ENCODE measurements at regions of chr10 and their contacts with region 1.

Region 1: GRCh38 chr10:60351191-60351853 is 38.4 kb downstream of the ANK3 start:
- DNase-seq: peak; percentile 40
- ATAC-seq: peak; percentile 85
- H3K4me3 ChIP-seq: no peak overlapping the region; the same call in 1 of the 2 replicates
- H3K27ac ChIP-seq: peak overlapping the region; percentile 45; the same call in 1 of the 2 replicates
- H3K4me1 ChIP-seq: peaks cover 34% of the 10 kb centered on the region
- H3K27me3 ChIP-seq: no peaks in the 10 kb centered on the region
- CTCF ChIP-seq: no peak
- EP300 ChIP-seq: peak; percentile 9 to 73; a peak in 3 of 4 replicates
- POLR2A ChIP-seq: no peak
- RAD21 ChIP-seq: no peak

Region 2: GRCh38 chr10:58384999-58385783 is 1966.1 kb before region 1 on chr10 and contains the start of gene TFAM:
- CTCF ChIA-PET with region 1: no interaction called
- POLR2A ChIA-PET with region 1: no interaction called
- RAD21 ChIA-PET with region 1: no interaction called
- SMC1A ChIA-PET with region 1: no interaction called
- in situ Hi-C with region 1: no loop called
- intact Hi-C with region 1: loop called (anchors 10 kb)
- DNase-seq: peak; percentile 66
- ATAC-seq: peak; percentile 90
- H3K4me3 ChIP-seq: peak within 1 kb of the TSS; percentile 85
- H3K27ac ChIP-seq: peak within 1 kb of the TSS; percentile 88
- H3K4me1 ChIP-seq: peaks cover 5% of the 10 kb centered on the region
- H3K27me3 ChIP-seq: no peaks in the 10 kb centered on the region
- CTCF ChIP-seq: peak; percentile 49 to 67 (median 61)
- EP300 ChIP-seq: peak in 1 of 2 experiments; percentile 30; a peak in 1 of 4 replicates
- POLR2A ChIP-seq: peak; percentile 99
- RAD21 ChIP-seq: peak; percentile 70
- polyA plus RNA-seq, gene TFAM: 96.1 to 114 TPM

Region 3: DNA sequence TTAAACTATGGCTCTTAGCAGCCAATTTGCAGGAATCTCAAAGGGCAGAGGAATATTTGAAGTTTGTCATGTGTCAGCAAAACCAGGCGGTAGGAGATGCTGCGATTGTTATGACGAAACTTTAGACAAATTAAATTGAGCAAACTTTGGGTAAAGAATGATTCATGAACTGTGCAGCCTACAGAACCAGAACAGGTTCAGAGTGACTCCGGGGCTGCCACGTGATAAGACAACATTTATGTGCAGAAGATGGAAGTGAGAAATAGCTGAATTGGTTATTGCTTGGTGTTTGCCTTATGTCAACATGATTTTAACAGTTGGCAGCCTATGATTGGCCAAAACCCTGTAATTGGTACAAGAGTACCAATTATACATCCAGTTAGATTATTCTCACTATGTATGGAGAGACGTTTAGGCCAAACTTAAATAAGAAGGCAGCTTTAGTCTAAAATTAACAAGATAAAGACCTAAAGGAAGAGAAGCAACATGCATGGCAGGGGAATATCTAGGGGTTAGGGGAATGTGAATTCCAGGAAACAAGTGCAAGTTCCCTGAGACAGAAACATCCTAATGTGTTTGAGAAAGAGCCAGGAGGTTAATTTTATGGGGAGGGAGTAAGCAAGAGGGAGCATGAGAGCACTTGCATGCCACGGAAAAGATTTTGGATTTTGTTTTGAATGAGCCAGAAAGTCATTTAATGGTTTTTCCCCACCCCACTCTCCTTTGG is 405.5 kb before region 1 on chr10:
- CTCF ChIA-PET with region 1: no interaction called
- POLR2A ChIA-PET with region 1: no interaction called
- RAD21 ChIA-PET with region 1: no interaction called
- SMC1A ChIA-PET with region 1: no interaction called
- in situ Hi-C with region 1: no loop called
- intact Hi-C with region 1: no loop called
- DNase-seq: no peak
- ATAC-seq: no peak
- H3K4me3 ChIP-seq: no peak overlapping the region
- H3K27ac ChIP-seq: no peak overlapping the region
- H3K4me1 ChIP-seq: no peaks in the 10 kb centered on the region
- H3K27me3 ChIP-seq: no peaks in the 10 kb centered on the region
- CTCF ChIP-seq: no peak
- EP300 ChIP-seq: no peak
- POLR2A ChIP-seq: no peak
- RAD21 ChIP-seq: no peak

Region 4: DNA sequence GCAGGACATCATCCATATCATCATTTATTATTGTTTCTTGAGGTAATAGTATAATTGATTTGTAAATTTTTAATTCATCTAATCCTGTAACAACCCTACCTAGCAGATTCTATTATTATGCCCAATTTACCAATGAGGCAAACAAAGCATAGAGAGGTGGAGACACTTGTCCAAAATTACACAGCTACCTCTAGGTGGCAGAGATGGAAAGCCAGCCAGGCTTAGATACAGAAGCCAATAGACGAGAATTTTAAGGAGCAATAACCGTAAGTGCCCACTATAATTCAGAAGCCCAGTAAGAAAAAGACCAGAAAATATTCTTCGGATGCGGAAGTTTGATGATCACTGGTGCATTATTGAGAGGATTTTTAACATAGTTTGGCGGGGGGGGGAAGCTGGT is 15.6 kb before region 1 on chr10:
- CTCF ChIA-PET with region 1: interaction called, 17 read pairs
- POLR2A ChIA-PET with region 1: no interaction called
- RAD21 ChIA-PET with region 1: interaction called, 4 read pairs
- SMC1A ChIA-PET with region 1: interaction called, 7 read pairs
- in situ Hi-C with region 1: no loop called
- intact Hi-C with region 1: no loop called
- DNase-seq: no peak
- ATAC-seq: peak; percentile 68
- H3K4me3 ChIP-seq: no peak overlapping the region
- H3K27ac ChIP-seq: no peak overlapping the region
- H3K4me1 ChIP-seq: no peaks in the 10 kb centered on the region
- H3K27me3 ChIP-seq: no peaks in the 10 kb centered on the region
- CTCF ChIP-seq: peak; percentile 26 to 48 (median 30); a peak in 4 of 6 replicates
- EP300 ChIP-seq: no peak
- POLR2A ChIP-seq: no peak
- RAD21 ChIP-seq: peak; percentile 64

Region 5: DNA sequence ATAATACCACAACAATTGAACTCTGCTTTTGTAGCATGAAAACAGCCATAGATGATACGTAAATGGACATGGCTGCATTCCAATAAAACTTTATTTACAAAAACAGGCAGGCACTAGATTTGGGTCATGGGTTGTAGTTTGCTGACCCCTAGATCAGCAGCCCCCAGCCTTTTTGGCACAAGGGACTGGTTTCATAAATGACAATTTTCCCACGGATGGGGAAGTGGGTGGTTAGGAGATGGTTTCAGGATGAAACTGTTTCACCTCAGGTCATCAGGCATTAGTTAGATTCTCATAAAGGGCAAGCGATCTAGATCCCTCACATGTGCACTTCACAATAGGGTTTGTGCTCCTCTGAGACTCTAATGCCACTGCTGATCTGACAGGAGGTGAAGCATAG is 54.9 kb after region 1 on chr10:
- CTCF ChIA-PET with region 1: no interaction called
- POLR2A ChIA-PET with region 1: no interaction called
- RAD21 ChIA-PET with region 1: interaction called, 3 read pairs
- SMC1A ChIA-PET with region 1: interaction called, 4 read pairs
- in situ Hi-C with region 1: no loop called
- intact Hi-C with region 1: loop called (anchors 5 kb)
- DNase-seq: peak; percentile 7
- ATAC-seq: peak; percentile 77
- H3K4me3 ChIP-seq: no peak overlapping the region
- H3K27ac ChIP-seq: no peak overlapping the region
- H3K4me1 ChIP-seq: no peaks in the 10 kb centered on the region
- H3K27me3 ChIP-seq: no peaks in the 10 kb centered on the region
- CTCF ChIP-seq: no peak
- EP300 ChIP-seq: no peak
- POLR2A ChIP-seq: no peak
- RAD21 ChIP-seq: no peak

Region 6: GRCh38 chr10:60426400-60426799 is 75.1 kb after region 1 on chr10:
- CTCF ChIA-PET with region 1: interaction called, 3 read pairs
- POLR2A ChIA-PET with region 1: no interaction called
- RAD21 ChIA-PET with region 1: interaction called, 3 read pairs
- SMC1A ChIA-PET with region 1: interaction called, 16 read pairs
- in situ Hi-C with region 1: no loop called
- intact Hi-C with region 1: loop called (anchors 5 kb)
- DNase-seq: no peak
- ATAC-seq: no peak
- H3K4me3 ChIP-seq: no peak overlapping the region
- H3K27ac ChIP-seq: no peak overlapping the region
- H3K4me1 ChIP-seq: no peaks in the 10 kb centered on the region
- H3K27me3 ChIP-seq: no peaks in the 10 kb centered on the region
- CTCF ChIP-seq: no peak
- EP300 ChIP-seq: no peak
- POLR2A ChIP-seq: no peak
- RAD21 ChIP-seq: no peak

Region 7: GRCh38 chr10:60434418-60435046 is 83.2 kb after region 1 on chr10:
- CTCF ChIA-PET with region 1: interaction called, 3 read pairs
- POLR2A ChIA-PET with region 1: no interaction called
- RAD21 ChIA-PET with region 1: interaction called, 5 read pairs
- SMC1A ChIA-PET with region 1: interaction called, 18 read pairs
- in situ Hi-C with region 1: no loop called
- intact Hi-C with region 1: loop called (anchors 5 kb)
- DNase-seq: no peak
- ATAC-seq: peak; percentile 64
- H3K4me3 ChIP-seq: no peak overlapping the region
- H3K27ac ChIP-seq: no peak overlapping the region
- H3K4me1 ChIP-seq: no peaks in the 10 kb centered on the region
- H3K27me3 ChIP-seq: no peaks in the 10 kb centered on the region
- CTCF ChIP-seq: peak; percentile 42 to 69 (median 46); a peak in 5 of 6 replicates
- EP300 ChIP-seq: no peak
- POLR2A ChIP-seq: no peak
- RAD21 ChIP-seq: peak; percentile 93

Measured in GM12878 (cell line).